Endothelial cell of umbilical vein (primary cell): ENCODE measurements at regions of chr4 and their contacts with region 1.

Region 1: GRCh38 chr4:125520258-125520990 is 205.7 kb downstream of the FAT4 start:
- DNase-seq: peak; percentile 91
- H3K4me3 ChIP-seq: no peak overlapping the region
- H3K27ac ChIP-seq: peak overlapping the region; percentile 34
- H3K4me1 ChIP-seq: peaks cover 25% of the 10 kb centered on the region
- H3K27me3 ChIP-seq: no peaks in the 10 kb centered on the region
- CTCF ChIP-seq: no peak
- POLR2A ChIP-seq: peak; percentile 73

Region 2: GRCh38 chr4:125582302-125582701 is 61.9 kb after region 1 on chr4:
- CTCF ChIA-PET with region 1: no interaction called
- POLR2A ChIA-PET with region 1: no interaction called
- dilution Hi-C with region 1: no loop called
- intact Hi-C with region 1: loop called (anchors 2 kb)
- DNase-seq: peak; percentile 55
- H3K4me3 ChIP-seq: no peak overlapping the region
- H3K27ac ChIP-seq: peak overlapping the region; percentile 57
- H3K4me1 ChIP-seq: peaks cover 11% of the 10 kb centered on the region
- H3K27me3 ChIP-seq: no peaks in the 10 kb centered on the region
- CTCF ChIP-seq: no peak
- POLR2A ChIP-seq: no peak

Region 3: GRCh38 chr4:125703443-125703842 is 183.0 kb after region 1 on chr4:
- CTCF ChIA-PET with region 1: no interaction called
- POLR2A ChIA-PET with region 1: no interaction called
- dilution Hi-C with region 1: no loop called
- intact Hi-C with region 1: loop called (anchors 1 kb)
- DNase-seq: peak; percentile 75
- H3K4me3 ChIP-seq: no peak overlapping the region
- H3K27ac ChIP-seq: no peak overlapping the region
- H3K4me1 ChIP-seq: peaks cover 20% of the 10 kb centered on the region
- H3K27me3 ChIP-seq: no peaks in the 10 kb centered on the region
- CTCF ChIP-seq: no peak
- POLR2A ChIP-seq: no peak

Region 4: DNA sequence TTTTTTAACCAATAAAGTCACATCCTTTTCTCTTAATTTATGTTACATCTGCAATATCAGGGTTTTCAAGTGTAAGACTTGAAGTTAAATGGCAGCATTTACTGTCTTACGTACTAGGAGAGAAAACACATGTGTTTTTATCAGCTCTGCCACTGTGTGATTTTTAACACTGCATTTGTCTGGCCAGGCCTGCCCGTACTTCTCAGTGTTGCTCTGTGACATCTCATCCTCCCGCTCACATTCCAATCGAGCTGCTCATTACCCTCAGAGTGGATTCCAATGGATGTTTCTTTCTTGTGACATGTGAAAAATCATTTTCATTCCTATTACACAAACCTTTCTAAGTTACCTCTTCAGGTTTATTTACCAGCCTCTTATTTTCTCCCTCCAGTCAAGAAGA is 214.7 kb after region 1 on chr4:
- CTCF ChIA-PET with region 1: no interaction called
- POLR2A ChIA-PET with region 1: no interaction called
- dilution Hi-C with region 1: no loop called
- intact Hi-C with region 1: loop called (anchors 1 kb)
- DNase-seq: peak; percentile 84
- H3K4me3 ChIP-seq: no peak overlapping the region
- H3K27ac ChIP-seq: peak overlapping the region; percentile 91
- H3K4me1 ChIP-seq: peaks cover 41% of the 10 kb centered on the region
- H3K27me3 ChIP-seq: no peaks in the 10 kb centered on the region
- CTCF ChIP-seq: no peak
- POLR2A ChIP-seq: no peak